Calu3 (cell line): ENCODE measurements at regions of chr3 and their contacts with region 1.

Region 1: DNA sequence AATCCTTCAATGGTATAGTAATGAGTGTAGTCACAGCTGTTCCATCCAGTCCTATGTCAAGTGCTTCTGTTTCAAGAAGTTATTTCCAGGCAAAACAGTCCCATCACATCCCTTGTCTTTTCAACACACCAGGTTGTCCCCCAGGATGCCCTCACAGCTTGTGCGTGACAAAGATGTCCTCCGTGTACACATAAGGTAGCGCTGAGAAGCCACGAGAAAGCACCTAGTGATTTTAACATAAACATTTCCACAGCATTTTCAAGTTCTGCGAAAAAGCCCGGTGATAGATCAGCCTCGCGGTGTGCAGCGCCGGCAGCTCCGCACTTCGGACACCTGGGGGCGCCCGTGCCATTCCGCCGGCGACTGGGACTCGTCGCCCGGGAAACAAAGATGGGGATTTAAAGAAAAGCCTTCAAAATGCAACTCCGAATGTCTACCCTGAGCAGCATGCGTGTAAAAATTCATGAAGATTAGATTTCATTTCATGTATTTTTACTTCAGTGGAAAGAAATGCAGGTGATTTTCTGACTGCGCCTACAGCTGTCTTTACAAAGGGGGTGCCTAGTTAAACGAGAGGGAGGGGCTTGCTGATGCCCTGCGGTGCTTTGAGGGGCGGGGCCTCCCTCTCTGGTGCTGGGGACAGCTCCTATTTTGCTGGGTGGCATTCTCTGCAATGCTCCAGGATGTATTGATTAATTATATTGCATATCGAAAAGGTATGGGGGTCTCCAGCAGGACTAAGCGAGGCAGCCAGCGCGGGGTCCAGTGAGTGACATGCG is 49.9 kb downstream of the KY start:
- DNase-seq: peak; percentile 94
- H3K4me3 Mint-ChIP-seq: no peak overlapping the region
- H3K27ac Mint-ChIP-seq: no peak overlapping the region
- H3K4me1 Mint-ChIP-seq: no peaks in the 10 kb centered on the region
- H3K27me3 Mint-ChIP-seq: peaks cover 94% of the 10 kb centered on the region
- CTCF ChIP-seq: peak; percentile 99

Region 2: DNA sequence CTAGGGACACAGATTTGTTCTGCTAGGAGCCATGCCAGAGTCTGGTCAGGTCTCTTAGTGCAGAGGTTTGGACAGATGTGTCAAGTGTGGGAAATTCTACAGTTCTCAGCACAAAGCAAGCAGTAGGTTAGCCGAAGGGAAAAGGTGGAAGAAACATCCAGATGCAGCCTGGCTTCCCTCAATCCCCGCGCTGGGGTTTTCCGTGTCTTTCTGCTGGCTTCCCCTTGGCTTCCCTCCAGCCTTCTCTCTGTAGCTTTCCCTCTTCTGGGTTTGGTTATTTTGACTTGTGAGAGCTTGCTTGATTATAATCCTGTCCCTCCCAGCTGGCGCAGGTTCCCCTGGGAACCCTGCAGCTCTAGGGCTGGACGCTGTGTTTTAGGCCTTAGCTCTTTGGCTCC is 850.6 kb before region 1 on chr3:
- CTCF ChIA-PET with region 1: no interaction called
- intact Hi-C with region 1: no loop called
- DNase-seq: no peak
- H3K4me3 Mint-ChIP-seq: no peak overlapping the region
- H3K27ac Mint-ChIP-seq: no peak overlapping the region
- H3K4me1 Mint-ChIP-seq: no peaks in the 10 kb centered on the region
- H3K27me3 Mint-ChIP-seq: peaks cover 73% of the 10 kb centered on the region
- CTCF ChIP-seq: no peak

Region 3: GRCh38 chr3:134517791-134518190 is 83.1 kb before region 1 on chr3:
- CTCF ChIA-PET with region 1: no interaction called
- intact Hi-C with region 1: no loop called
- DNase-seq: no peak
- H3K4me3 Mint-ChIP-seq: no peak overlapping the region
- H3K27ac Mint-ChIP-seq: peak overlapping the region; percentile 44
- H3K4me1 Mint-ChIP-seq: peaks cover 26% of the 10 kb centered on the region
- H3K27me3 Mint-ChIP-seq: no peaks in the 10 kb centered on the region
- CTCF ChIP-seq: no peak

Region 4: DNA sequence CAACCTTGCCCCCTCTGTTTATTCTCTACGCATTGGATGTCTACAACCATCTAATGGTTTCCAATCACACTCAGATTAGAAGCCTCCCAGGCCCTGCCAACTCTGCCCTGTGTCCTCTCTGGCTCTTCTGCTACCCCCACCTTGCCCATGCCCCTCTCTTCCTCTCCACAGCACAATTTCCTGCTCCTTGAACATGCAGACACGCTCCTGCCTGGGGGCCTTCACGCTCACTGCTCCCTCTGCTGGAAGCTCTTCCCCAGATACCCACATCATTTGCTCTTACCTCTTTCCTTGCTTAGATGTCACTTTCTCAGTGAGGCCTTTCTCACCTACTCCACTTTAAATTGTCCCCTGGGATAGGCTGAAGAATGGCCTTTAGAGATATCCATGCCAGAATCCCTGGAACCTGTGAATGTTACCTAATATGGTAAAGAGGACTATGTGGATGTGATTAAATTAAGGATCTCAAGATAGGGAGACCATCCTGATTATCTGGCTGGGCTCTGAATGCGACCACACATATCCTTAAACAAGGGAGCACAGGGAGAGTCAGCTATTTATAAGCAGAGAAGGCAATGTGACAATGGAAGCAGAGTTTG is 40.1 kb after region 1 on chr3:
- CTCF ChIA-PET with region 1: interaction called, 3 read pairs
- intact Hi-C with region 1: loop called (anchors 1 kb)
- DNase-seq: peak; percentile 57
- H3K4me3 Mint-ChIP-seq: no peak overlapping the region
- H3K27ac Mint-ChIP-seq: no peak overlapping the region
- H3K4me1 Mint-ChIP-seq: no peaks in the 10 kb centered on the region
- H3K27me3 Mint-ChIP-seq: peaks cover 62% of the 10 kb centered on the region
- CTCF ChIP-seq: peak; percentile 78

Region 5: DNA sequence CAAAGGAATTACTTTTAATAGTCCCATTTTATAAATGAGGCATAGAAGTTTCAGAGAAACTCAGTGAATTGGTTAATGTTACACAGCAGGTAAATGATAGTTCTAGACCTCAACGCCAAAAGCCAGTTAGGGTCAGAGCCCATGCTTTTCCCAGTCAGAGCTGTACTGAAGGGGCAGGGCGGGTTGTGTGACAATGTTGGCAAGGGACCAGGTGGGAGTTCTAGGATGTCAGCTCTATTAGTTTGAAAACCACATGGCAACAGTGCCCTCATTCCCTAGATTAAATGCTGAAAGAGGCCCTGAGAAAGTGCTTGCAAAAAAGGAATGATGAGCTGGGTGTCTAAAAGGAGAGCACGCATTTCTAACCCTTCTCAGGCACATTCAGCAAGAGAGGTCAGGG is 128.8 kb after region 1 on chr3:
- CTCF ChIA-PET with region 1: no interaction called
- intact Hi-C with region 1: no loop called
- DNase-seq: no peak
- H3K4me3 Mint-ChIP-seq: no peak overlapping the region
- H3K27ac Mint-ChIP-seq: no peak overlapping the region
- H3K4me1 Mint-ChIP-seq: no peaks in the 10 kb centered on the region
- H3K27me3 Mint-ChIP-seq: peaks cover 52% of the 10 kb centered on the region
- CTCF ChIP-seq: no peak

Region 6: DNA sequence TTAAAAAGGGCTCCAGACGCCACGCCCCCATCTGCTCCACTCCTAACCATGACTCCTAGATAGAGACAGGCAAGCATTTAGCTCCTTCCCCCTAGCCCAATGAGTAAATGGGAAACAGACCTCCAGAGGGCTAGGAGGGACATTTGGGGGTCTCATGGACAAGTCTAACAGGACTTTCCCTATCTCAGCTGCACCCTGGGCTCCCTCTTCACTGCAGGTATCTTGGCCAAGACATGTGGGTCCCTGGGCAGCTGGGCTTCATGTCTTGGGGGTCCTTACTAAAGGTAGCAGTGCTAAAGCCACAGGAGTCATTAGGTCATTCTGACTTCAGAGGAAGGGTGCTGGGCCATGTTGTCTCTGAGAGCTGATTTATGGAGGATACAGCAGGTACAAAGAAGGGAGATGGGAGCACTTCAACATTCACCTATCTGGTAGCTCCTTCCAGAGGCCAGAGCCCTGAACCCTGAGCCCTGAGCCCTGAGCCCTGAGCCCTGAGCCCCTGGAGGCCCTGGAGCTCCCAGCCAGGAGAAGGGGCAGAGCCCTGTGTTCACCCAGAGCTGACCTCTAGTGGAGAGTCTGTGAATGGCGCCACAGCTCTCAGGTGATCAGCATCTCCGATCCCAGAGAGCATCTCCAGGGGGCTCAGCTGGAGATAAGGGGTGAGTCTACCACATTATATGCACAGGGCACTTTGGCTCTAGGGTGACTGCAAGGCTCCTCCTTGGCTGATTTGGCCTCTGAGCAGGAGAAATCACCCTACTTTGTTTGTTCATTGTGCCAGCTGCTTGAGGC is 154.1 kb after region 1 on chr3:
- CTCF ChIA-PET with region 1: interaction called, 19 read pairs
- intact Hi-C with region 1: loop called (anchors 1 kb)
- DNase-seq: peak; percentile 79
- H3K4me3 Mint-ChIP-seq: no peak overlapping the region
- H3K27ac Mint-ChIP-seq: no peak overlapping the region
- H3K4me1 Mint-ChIP-seq: no peaks in the 10 kb centered on the region
- H3K27me3 Mint-ChIP-seq: peaks cover 71% of the 10 kb centered on the region
- CTCF ChIP-seq: peak; percentile 85

Region 7: GRCh38 chr3:135310317-135310716 is 709.4 kb after region 1 on chr3:
- CTCF ChIA-PET with region 1: no interaction called
- intact Hi-C with region 1: no loop called
- DNase-seq: no peak
- H3K4me3 Mint-ChIP-seq: no peak overlapping the region
- H3K27ac Mint-ChIP-seq: no peak overlapping the region
- H3K4me1 Mint-ChIP-seq: no peaks in the 10 kb centered on the region
- H3K27me3 Mint-ChIP-seq: no peaks in the 10 kb centered on the region
- CTCF ChIP-seq: no peak

Region 8: DNA sequence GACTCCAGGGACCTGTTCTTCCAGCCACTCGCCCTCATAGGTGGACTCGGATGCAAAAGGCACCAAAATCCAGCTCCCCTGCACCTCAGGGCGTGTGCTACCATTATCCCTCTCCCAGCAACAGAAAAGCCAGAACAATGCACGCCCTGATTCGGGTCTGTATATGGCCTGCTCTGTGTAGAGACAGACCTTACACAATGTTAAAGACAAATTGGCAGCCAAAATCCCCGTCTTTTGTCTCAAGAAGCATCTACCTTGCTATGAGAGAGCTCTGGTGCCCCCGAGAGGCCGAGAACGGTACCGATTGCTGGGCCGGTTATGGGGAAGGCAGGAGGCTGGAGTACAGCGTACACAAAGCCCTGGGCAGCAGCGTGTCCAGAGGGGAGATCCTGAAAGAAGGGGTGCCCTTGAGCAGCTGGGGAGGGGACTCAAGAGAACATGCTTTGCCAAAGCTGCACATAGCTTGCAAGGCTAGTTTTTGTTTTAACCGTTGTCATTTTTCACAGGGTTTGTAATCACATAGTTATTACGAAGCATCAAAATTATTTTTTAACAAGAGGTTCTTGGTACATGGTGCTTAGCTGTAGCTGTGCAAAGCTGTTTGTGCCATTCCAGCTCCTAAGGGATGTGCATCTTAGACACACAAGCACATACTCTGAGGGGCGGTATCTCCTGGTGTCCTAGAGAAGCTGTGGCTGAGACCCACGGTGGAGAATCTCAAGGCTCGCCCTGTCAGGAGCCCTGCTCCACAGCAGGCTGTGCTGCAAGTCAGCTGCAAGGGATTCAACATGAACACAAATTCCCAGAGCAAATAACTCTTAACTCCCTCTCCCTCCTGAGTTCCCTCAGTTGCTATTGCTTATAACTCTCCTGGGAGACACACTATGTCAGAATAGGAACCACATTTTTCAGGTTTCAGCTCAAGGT is 903.1 kb after region 1 on chr3:
- CTCF ChIA-PET with region 1: no interaction called
- intact Hi-C with region 1: loop called (anchors 2 kb)
- DNase-seq: peak; percentile 91
- H3K4me3 Mint-ChIP-seq: no peak overlapping the region
- H3K27ac Mint-ChIP-seq: no peak overlapping the region
- H3K4me1 Mint-ChIP-seq: peaks cover 8% of the 10 kb centered on the region
- H3K27me3 Mint-ChIP-seq: peaks cover 78% of the 10 kb centered on the region
- CTCF ChIP-seq: peak; percentile 54